Activated B cell treated with CpG ODN at 0.5 μM for 24 hours (primary cell): ENCODE measurements at regions of chr11 and their contacts with region 1.

Region 1: GRCh38 chr11:69166218-69167115 is 10.7 kb downstream of the SMIM38 start:
- DNase-seq: peak; percentile 37
- ATAC-seq: peak; percentile 94
- H3K4me3 Mint-ChIP-seq: peak overlapping the region; percentile 62
- H3K27ac Mint-ChIP-seq: peak overlapping the region; percentile 76
- H3K4me1 Mint-ChIP-seq: peaks cover 18% of the 10 kb centered on the region
- H3K27me3 Mint-ChIP-seq: no peaks in the 10 kb centered on the region
- CTCF ChIP-seq: no peak

Region 2: DNA sequence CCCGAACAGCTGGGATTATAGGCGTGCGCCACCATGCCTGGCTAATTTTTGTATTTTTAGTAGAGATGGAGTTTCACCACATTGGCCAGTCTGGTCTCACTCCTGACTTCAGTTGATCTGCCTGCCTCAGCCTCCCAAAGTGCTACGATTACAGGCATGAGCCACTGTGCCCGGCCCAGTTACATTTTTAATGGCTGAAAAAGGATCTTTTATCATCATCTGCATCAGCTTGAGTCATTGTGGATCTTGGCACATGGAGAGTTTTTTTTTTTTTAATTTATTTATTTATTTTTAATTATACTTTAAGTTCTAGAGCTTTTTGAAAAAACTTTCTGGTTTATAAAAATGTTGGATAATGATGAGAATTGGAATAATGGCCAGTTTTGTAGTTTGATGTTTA is 254.2 kb before region 1 on chr11:
- CTCF ChIA-PET with region 1: no interaction called
- POLR2A ChIA-PET with region 1: no interaction called
- intact Hi-C with region 1: no loop called
- DNase-seq: no peak
- ATAC-seq: no peak
- H3K4me3 Mint-ChIP-seq: no peak overlapping the region
- H3K27ac Mint-ChIP-seq: no peak overlapping the region
- H3K4me1 Mint-ChIP-seq: no peaks in the 10 kb centered on the region
- H3K27me3 Mint-ChIP-seq: no peaks in the 10 kb centered on the region
- CTCF ChIP-seq: no peak

Region 3: GRCh38 chr11:69122642-69123431 is 43.6 kb before region 1 on chr11:
- CTCF ChIA-PET with region 1: no interaction called
- POLR2A ChIA-PET with region 1: no interaction called
- intact Hi-C with region 1: loop called (anchors 5 kb)
- DNase-seq: no peak
- ATAC-seq: peak; percentile 61
- H3K4me3 Mint-ChIP-seq: peak overlapping the region; percentile 19
- H3K27ac Mint-ChIP-seq: no peak overlapping the region
- H3K4me1 Mint-ChIP-seq: peaks cover 25% of the 10 kb centered on the region
- H3K27me3 Mint-ChIP-seq: peaks cover 3% of the 10 kb centered on the region
- CTCF ChIP-seq: no peak

Region 4: DNA sequence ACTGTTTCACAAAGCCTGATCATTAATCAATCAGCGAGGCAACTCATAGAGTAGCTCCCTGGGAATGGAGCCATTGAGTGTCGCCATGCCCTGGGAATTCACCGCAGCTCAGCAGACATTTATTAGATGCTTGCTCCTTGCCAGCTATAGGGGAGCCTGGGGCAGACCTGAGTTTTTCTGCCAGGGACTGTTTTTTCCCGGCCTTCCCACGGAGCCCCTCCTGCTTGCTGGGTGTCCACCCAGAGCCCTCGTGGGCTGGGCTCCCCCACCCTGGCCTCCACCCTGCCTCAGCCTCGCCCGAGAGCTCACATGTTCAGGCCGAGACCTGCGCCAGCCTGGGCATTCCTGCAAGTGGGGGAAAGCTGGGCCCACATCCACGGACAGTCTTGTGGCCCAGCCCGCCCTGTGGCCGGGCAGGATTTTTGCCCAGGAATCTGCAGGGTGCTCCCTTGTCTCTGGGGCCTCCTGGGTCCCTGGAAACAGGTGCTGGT is 54.1 kb after region 1 on chr11:
- CTCF ChIA-PET with region 1: no interaction called
- POLR2A ChIA-PET with region 1: no interaction called
- intact Hi-C with region 1: no loop called
- DNase-seq: no peak
- ATAC-seq: no peak
- H3K4me3 Mint-ChIP-seq: no peak overlapping the region
- H3K27ac Mint-ChIP-seq: no peak overlapping the region
- H3K4me1 Mint-ChIP-seq: no peaks in the 10 kb centered on the region
- H3K27me3 Mint-ChIP-seq: peaks cover 10% of the 10 kb centered on the region
- CTCF ChIP-seq: no peak

Region 5: DNA sequence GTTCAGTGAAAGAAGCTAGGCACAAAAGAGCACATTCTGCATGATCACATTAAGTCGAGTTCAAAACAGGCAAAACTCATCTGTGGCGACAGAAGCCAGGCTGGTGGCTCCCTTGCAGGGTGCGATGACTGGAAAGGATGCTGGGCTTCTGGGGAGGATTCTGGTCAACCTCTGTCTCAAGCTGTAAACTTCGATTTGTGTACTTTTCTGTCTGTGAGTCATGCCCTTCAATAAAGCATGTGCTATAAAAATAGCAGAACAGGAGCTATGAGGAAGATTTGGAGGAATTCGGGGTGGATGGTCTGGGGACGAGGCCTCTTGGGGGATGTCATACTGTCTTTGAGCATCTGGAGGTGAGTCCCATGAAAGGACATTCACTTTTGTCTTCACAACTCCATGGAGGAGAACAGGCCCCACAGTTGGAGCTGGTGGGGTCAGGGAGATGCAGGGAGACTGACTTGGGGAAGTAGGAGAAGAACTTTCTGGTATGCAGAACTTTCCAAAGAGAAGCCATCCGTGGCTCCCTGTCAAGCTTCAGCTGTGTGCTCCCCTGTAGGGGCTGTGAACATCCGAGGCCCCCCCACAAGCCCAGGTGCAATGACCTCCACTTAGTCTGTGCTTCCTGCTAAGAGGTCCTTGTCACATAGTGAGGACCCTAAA is 237.2 kb after region 1 on chr11:
- CTCF ChIA-PET with region 1: no interaction called
- POLR2A ChIA-PET with region 1: no interaction called
- intact Hi-C with region 1: no loop called
- DNase-seq: no peak
- ATAC-seq: no peak
- H3K4me3 Mint-ChIP-seq: no peak overlapping the region
- H3K27ac Mint-ChIP-seq: no peak overlapping the region
- H3K4me1 Mint-ChIP-seq: peaks cover 15% of the 10 kb centered on the region
- H3K27me3 Mint-ChIP-seq: peaks cover 6% of the 10 kb centered on the region
- CTCF ChIP-seq: no peak